Activated B cell treated with CpG ODN at 0.5 μM for 24 hours (primary cell): ENCODE measurements at regions of chr12 and their contacts with region 1.

Region 1: DNA sequence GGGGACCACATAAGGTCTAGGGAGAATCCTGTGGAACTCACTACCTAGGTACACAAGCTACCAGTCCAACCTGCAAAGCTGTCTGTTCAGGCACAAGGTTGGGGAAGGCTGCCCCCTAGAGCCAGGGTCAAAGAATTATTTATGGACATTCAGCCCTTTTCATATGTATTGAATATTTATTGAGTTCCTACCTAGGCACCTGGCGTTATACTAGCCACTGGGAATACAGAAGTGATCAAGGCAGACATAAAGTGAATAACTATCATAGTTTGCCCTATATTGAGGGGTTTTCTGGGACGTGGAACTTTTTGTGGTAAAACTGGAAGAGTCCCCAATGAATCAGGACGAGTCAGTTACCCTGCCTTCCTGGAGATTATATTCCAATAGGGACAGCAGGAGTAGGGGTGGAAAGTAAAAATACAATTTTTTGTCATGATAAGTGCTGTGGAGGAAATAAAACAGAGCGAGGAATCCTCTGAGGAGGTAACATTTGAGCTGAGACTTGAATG is 5.8 kb upstream of the SLC48A1 start:
- DNase-seq: peak; percentile 52
- ATAC-seq: peak; percentile 84
- H3K4me3 Mint-ChIP-seq: no peak overlapping the region
- H3K27ac Mint-ChIP-seq: no peak overlapping the region
- H3K4me1 Mint-ChIP-seq: peaks cover 9% of the 10 kb centered on the region
- H3K27me3 Mint-ChIP-seq: no peaks in the 10 kb centered on the region
- CTCF ChIP-seq: no peak

Region 2: DNA sequence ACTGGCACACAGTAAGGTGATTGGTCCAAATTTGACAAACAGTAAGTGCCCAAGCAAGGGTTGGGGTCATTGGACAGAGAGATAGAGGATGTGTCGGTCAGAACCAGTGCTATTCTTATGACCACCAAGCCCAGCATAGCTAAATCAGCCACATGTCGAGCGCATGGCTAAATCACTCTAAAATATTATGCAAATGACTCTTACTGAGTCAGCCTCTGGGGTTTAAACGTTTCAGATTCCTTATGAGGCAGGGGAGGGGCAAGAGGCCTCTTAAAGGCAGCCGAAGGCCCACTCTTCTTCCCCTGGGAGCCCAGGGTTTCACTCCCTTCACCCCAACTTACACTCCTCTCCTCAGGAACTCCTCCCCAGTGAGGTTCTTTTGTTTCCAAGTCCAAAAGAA is 41.4 kb before region 1 on chr12:
- CTCF ChIA-PET with region 1: interaction called, 13 read pairs
- POLR2A ChIA-PET with region 1: interaction called, 3 read pairs
- intact Hi-C with region 1: no loop called
- DNase-seq: no peak
- ATAC-seq: peak; percentile 92
- H3K4me3 Mint-ChIP-seq: no peak overlapping the region
- H3K27ac Mint-ChIP-seq: peak overlapping the region; percentile 65
- H3K4me1 Mint-ChIP-seq: peaks cover 37% of the 10 kb centered on the region
- H3K27me3 Mint-ChIP-seq: no peaks in the 10 kb centered on the region
- CTCF ChIP-seq: no peak